ENCODE measurements at regions of chr10 and their contacts with region 1.

Region 1: DNA sequence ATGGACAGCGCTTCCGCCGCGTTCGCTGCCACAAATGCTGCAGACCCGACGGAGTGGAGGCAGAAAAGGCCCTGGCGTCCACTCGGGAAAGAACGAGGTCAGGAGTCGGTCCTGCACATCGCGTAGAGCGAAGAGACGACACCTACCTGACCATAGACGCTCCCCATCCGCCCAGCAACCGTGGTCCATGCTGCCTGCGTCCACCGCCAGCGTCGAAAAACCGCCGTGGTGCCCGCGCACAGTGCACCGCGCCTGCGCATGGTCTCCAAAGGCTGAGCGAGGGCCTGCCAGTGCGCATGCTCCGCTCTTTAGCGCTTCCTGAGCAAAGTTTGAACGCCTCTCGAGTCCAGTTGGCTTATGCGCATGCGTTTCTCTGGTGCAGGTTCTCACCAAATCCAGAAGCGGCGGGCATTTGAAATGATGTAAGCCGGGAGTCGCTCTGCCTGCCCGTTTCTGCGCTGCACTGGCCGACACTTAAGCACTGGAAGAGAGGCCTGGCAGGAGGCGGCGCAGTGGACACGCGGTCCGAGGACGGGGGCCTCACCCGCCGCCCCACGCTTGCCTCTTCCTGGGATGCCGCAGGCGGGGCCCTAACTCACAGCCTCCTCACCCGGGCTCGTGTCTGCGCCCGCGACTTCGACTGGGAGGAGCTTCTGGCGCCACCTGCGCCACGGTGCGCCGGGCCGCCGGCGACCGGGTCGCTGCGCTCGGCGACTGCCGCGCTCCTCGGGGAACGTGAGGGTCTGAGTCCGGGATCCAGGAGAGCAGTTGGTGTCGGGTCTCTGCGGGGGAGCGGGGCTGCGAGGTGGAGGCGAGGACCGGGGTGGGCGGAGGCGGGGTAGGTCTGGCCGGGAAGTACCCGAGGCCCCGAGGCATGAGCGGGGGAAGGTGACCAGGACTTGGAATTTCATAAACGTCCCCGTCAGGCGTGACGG is at the start of gene FAM24B:
- DNase-seq: peak; percentile 87 to 99 (median 94)
- ATAC-seq: peak; percentile 86
- H3K4me3 ChIP-seq: peak within 1 kb of the TSS; percentile 56 to 75
- H3K4me3 Mint-ChIP-seq: peak within 1 kb of the TSS; percentile 93
- H3K27ac ChIP-seq: peak within 1 kb of the TSS; percentile 60 to 79
- H3K27ac Mint-ChIP-seq: peak within 1 kb of the TSS; percentile 88
- H3K4me1 ChIP-seq: peaks cover 34% of the 10 kb centered on the region
- H3K4me1 Mint-ChIP-seq: peaks cover 53% of the 10 kb centered on the region
- H3K27me3 ChIP-seq: no peaks in the 10 kb centered on the region
- H3K27me3 Mint-ChIP-seq: no peaks in the 10 kb centered on the region
- CTCF ChIP-seq: no peak
- total RNA-seq, gene FAM24B: 12.5 to 12.7 TPM

Region 2: GRCh38 chr10:122802282-122802681 is 77.3 kb before region 1 on chr10:
- CTCF ChIA-PET with region 1: no interaction called
- POLR2A ChIA-PET with region 1: no interaction called
- intact Hi-C with region 1: no loop called
- DNase-seq: no peak
- ATAC-seq: no peak
- H3K4me3 ChIP-seq: no peak overlapping the region
- H3K4me3 Mint-ChIP-seq: no peak overlapping the region
- H3K27ac ChIP-seq: no peak overlapping the region
- H3K27ac Mint-ChIP-seq: no peak overlapping the region
- H3K4me1 ChIP-seq: no peaks in the 10 kb centered on the region
- H3K4me1 Mint-ChIP-seq: no peaks in the 10 kb centered on the region
- H3K27me3 ChIP-seq: no peaks in the 10 kb centered on the region
- H3K27me3 Mint-ChIP-seq: peaks cover 14% of the 10 kb centered on the region
- CTCF ChIP-seq: no peak

Region 3: DNA sequence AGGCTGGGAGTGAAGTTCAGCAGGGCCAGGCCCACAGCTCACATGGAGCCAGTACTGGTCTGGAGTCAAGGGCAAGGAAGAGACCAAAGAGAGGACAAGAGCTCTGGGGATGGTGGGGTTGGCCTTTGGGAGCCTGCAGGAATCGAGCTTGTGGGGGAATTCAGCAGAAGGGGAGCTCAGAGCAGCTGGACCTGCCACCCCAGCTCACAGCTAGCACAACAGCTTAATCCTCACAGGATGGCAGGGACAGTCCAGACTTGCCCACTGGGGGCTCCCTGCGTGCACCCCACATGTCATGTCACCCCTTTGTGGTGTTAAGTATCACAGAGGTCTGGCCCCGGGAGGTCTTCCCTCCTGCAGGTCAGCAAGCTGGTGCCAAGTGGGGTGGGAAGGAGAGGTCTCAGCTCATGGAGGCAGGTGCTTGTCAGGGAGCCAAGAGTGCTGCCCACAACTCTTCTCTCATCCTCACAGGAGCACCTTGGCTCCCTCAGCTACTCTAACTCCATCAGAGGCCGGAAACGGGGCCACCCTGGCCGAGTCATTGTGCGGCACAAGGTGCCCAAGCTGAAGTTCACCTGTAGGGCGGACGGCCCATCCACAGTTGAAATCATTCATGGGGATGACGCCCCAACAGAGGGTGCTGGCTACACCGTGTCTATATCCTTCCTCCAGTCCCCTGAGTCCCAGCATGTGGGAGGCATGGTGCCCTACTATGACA is 56.5 kb before region 1 on chr10:
- CTCF ChIA-PET with region 1: no interaction called
- POLR2A ChIA-PET with region 1: no interaction called
- intact Hi-C with region 1: no loop called
- DNase-seq: no peak
- ATAC-seq: no peak
- H3K4me3 ChIP-seq: no peak overlapping the region
- H3K4me3 Mint-ChIP-seq: no peak overlapping the region
- H3K27ac ChIP-seq: no peak overlapping the region
- H3K27ac Mint-ChIP-seq: no peak overlapping the region
- H3K4me1 ChIP-seq: no peaks in the 10 kb centered on the region
- H3K4me1 Mint-ChIP-seq: no peaks in the 10 kb centered on the region
- H3K27me3 ChIP-seq: peaks cover 0 to under 1% of the 10 kb centered on the region in 2 experiments
- H3K27me3 Mint-ChIP-seq: peaks cover 48% of the 10 kb centered on the region
- CTCF ChIP-seq: no peak

Region 4: GRCh38 chr10:122953827-122954730 is 74.5 kb after region 1 on chr10 and contains the start of gene C10orf88:
- CTCF ChIA-PET with region 1: no interaction called
- POLR2A ChIA-PET with region 1: interaction called, 3 read pairs
- intact Hi-C with region 1: loop called (anchors 1 kb)
- DNase-seq: peak; percentile 95 to 100 (median 97)
- ATAC-seq: peak; percentile 91
- H3K4me3 ChIP-seq: peak within 1 kb of the TSS; percentile 67 to 82
- H3K4me3 Mint-ChIP-seq: peak within 1 kb of the TSS; percentile 86
- H3K27ac ChIP-seq: peak within 1 kb of the TSS; percentile 36 to 72
- H3K27ac Mint-ChIP-seq: peak within 1 kb of the TSS; percentile 86
- H3K4me1 ChIP-seq: peaks cover 21% of the 10 kb centered on the region
- H3K4me1 Mint-ChIP-seq: peaks cover 46% of the 10 kb centered on the region
- H3K27me3 ChIP-seq: no peaks in the 10 kb centered on the region
- H3K27me3 Mint-ChIP-seq: no peaks in the 10 kb centered on the region
- CTCF ChIP-seq: no peak
- total RNA-seq, gene C10orf88: 2.2 to 2.8 TPM

Region 5: GRCh38 chr10:123008439-123009205 is 129.0 kb after region 1 on chr10 and contains the starts of genes ACADSB and IKZF5:
- CTCF ChIA-PET with region 1: no interaction called
- POLR2A ChIA-PET with region 1: no interaction called
- intact Hi-C with region 1: loop called (anchors 1 kb)
- DNase-seq: peak; percentile 92 to 99 (median 96)
- ATAC-seq: peak; percentile 89
- H3K4me3 ChIP-seq: peak within 1 kb of the TSS; percentile 89 to 100
- H3K4me3 Mint-ChIP-seq: peak within 1 kb of the TSS; percentile 97
- H3K27ac ChIP-seq: peak within 1 kb of the TSS; percentile 98 to 99
- H3K27ac Mint-ChIP-seq: peak within 1 kb of the TSS; percentile 99
- H3K4me1 ChIP-seq: peaks cover 48% of the 10 kb centered on the region
- H3K4me1 Mint-ChIP-seq: peaks cover 62% of the 10 kb centered on the region
- H3K27me3 ChIP-seq: no peaks in the 10 kb centered on the region
- H3K27me3 Mint-ChIP-seq: no peaks in the 10 kb centered on the region
- CTCF ChIP-seq: no peak
- total RNA-seq, gene ACADSB: 18.2 to 18.5 TPM
- total RNA-seq, gene IKZF5: 89.5 to 96.1 TPM

Region 6: GRCh38 chr10:123236122-123236521 is 356.5 kb after region 1 on chr10:
- CTCF ChIA-PET with region 1: no interaction called
- POLR2A ChIA-PET with region 1: no interaction called
- intact Hi-C with region 1: loop called in 1 of 2 experiments (anchors 10 kb)
- DNase-seq: no peak
- ATAC-seq: no peak
- H3K4me3 ChIP-seq: no peak overlapping the region
- H3K4me3 Mint-ChIP-seq: no peak overlapping the region
- H3K27ac ChIP-seq: no peak overlapping the region
- H3K27ac Mint-ChIP-seq: no peak overlapping the region
- H3K4me1 ChIP-seq: peaks cover 7% of the 10 kb centered on the region
- H3K4me1 Mint-ChIP-seq: peaks cover 11% of the 10 kb centered on the region
- H3K27me3 ChIP-seq: no peaks in the 10 kb centered on the region
- H3K27me3 Mint-ChIP-seq: no peaks in the 10 kb centered on the region
- CTCF ChIP-seq: no peak

Region 7: DNA sequence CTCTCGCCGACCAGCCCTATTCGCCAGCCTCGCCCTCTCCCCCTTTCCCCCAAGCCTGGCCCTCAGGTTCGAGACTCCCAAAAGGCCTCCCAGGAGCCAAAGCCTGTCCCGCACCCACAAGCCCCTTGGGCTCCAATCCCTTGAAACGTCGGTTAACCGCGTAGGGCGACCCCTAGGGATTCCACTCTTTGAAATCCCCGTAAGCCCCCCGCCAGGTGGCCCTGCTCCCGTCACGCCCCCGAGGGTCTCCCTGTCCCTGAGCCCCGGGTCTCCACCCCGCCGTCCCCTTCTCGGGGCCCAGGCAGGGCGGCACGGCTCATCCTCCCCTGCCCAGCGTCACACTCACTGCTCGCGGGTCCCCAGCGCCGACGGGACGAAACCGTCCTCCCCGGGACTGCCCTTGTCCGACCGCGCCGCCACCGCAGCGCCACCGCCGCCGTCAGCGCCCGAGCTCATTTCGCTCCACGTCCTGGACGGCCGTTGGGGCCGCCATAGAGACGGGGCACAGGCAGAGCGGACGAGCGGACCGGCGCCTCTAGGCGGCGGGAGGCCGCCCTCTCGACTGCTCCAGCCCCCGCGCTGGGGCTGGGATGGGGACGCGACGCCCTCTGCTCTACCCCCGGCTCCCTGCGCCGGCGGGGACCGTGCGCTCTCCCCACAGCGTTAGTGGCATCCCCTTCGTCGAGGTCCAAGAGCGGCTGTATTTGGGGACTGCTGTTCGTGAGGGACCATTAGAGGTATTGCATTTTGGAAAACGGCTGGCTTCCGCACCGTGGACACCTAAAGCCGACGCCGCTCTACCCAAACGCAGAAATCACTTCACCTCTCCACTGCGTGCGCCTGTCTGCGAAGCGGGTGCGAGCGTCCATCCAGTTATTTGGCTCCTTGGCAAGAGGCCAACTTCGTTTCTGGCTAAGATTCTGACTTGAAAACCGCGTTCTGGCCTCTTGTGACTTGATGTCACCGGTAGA is 1912.1 kb after region 1 on chr10 and contains the start of gene EEF1AKMT2:
- CTCF ChIA-PET with region 1: no interaction called
- POLR2A ChIA-PET with region 1: no interaction called
- intact Hi-C with region 1: loop called in 1 of 2 experiments (anchors 10 kb)
- DNase-seq: peak; percentile 72 to 90 (median 80)
- ATAC-seq: peak; percentile 94
- H3K4me3 ChIP-seq: peak within 1 kb of the TSS; percentile 75 to 93
- H3K4me3 Mint-ChIP-seq: peak within 1 kb of the TSS; percentile 98
- H3K27ac ChIP-seq: peak within 1 kb of the TSS; percentile 62 to 86
- H3K27ac Mint-ChIP-seq: peak within 1 kb of the TSS; percentile 96
- H3K4me1 ChIP-seq: peaks cover 11% of the 10 kb centered on the region
- H3K4me1 Mint-ChIP-seq: peaks cover 24% of the 10 kb centered on the region
- H3K27me3 ChIP-seq: no peaks in the 10 kb centered on the region
- H3K27me3 Mint-ChIP-seq: no peaks in the 10 kb centered on the region
- CTCF ChIP-seq: no peak
- total RNA-seq, gene EEF1AKMT2: 13.8 to 13.9 TPM